Activated naive CD4-positive, alpha-beta T cell treated with anti-CD3 and anti-CD28 coated beads for 36 hours (primary cell): ENCODE measurements at regions of chr4 and their contacts with region 1.

Region 1: GRCh38 chr4:68498413-68499007 is 51.2 kb downstream of the TMPRSS11E start:
- DNase-seq: peak; percentile 81
- H3K4me3 Mint-ChIP-seq: no peak overlapping the region
- H3K27ac Mint-ChIP-seq: no peak overlapping the region
- H3K4me1 Mint-ChIP-seq: peaks cover 7% of the 10 kb centered on the region
- H3K27me3 Mint-ChIP-seq: no peaks in the 10 kb centered on the region

Region 2: GRCh38 chr4:67288964-67289363 is 1209.5 kb before region 1 on chr4:
- CTCF ChIA-PET with region 1: no interaction called
- intact Hi-C with region 1: no loop called
- DNase-seq: peak; percentile 56
- H3K4me3 Mint-ChIP-seq: no peak overlapping the region
- H3K27ac Mint-ChIP-seq: no peak overlapping the region
- H3K4me1 Mint-ChIP-seq: no peaks in the 10 kb centered on the region
- H3K27me3 Mint-ChIP-seq: peaks cover 5% of the 10 kb centered on the region

Region 3: DNA sequence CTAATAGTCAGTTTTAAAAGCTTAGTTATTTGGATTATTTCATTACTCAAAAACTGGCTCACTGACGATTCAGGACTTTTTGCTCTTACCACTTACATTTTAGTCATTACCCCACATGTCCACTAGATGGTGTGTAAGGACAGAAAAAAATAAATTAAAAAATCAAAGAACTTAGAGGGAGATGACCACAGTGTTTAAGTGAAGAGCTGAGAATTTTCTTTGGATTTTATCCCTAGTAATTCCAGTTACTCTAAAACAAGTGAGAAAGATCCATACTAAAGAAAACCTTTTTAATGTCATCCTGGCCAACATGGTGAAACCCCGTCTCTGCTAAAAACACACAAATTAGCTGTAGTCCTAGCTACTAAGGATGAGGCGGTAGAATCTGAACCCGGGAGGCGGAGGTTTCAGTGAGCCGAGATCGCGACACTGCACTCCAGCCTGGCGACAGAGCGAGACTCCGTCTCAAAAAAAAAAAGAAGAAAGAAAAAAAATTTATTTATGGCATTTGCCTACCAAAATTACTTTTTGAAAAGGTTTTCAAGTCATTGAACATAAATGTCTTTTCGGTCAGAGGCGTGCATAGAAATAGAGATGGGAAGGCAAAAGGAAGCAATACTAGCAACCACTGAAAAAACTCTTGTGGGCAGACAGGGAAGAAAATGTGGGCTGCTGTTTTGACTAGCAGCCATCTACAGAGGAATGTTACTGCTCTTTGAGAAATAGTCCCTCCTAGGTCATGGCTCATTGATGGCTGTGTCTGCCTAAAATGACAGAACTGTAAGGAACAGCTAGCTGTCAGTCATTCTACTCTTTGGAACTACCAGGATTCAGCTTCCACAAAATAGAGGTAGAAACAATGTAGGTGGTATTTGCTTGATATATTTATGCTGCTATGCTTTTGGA is 226.4 kb before region 1 on chr4:
- CTCF ChIA-PET with region 1: no interaction called
- intact Hi-C with region 1: loop called (anchors 2 kb)
- DNase-seq: no peak
- H3K4me3 Mint-ChIP-seq: peak overlapping the region; percentile 30
- H3K27ac Mint-ChIP-seq: no peak overlapping the region
- H3K4me1 Mint-ChIP-seq: peaks cover 8% of the 10 kb centered on the region
- H3K27me3 Mint-ChIP-seq: peaks cover 6% of the 10 kb centered on the region

Region 4: GRCh38 chr4:69167300-69167699 is 668.8 kb after region 1 on chr4:
- CTCF ChIA-PET with region 1: interaction called, 5 read pairs
- intact Hi-C with region 1: loop called (anchors 1 kb)
- DNase-seq: no peak
- H3K4me3 Mint-ChIP-seq: no peak overlapping the region
- H3K27ac Mint-ChIP-seq: no peak overlapping the region
- H3K4me1 Mint-ChIP-seq: no peaks in the 10 kb centered on the region
- H3K27me3 Mint-ChIP-seq: no peaks in the 10 kb centered on the region

Region 5: GRCh38 chr4:69617083-69617694 is 1118.7 kb after region 1 on chr4:
- CTCF ChIA-PET with region 1: no interaction called
- intact Hi-C with region 1: loop called (anchors 10 kb)
- DNase-seq: peak; percentile 4
- H3K4me3 Mint-ChIP-seq: no peak overlapping the region
- H3K27ac Mint-ChIP-seq: no peak overlapping the region
- H3K4me1 Mint-ChIP-seq: no peaks in the 10 kb centered on the region
- H3K27me3 Mint-ChIP-seq: no peaks in the 10 kb centered on the region

Region 6: DNA sequence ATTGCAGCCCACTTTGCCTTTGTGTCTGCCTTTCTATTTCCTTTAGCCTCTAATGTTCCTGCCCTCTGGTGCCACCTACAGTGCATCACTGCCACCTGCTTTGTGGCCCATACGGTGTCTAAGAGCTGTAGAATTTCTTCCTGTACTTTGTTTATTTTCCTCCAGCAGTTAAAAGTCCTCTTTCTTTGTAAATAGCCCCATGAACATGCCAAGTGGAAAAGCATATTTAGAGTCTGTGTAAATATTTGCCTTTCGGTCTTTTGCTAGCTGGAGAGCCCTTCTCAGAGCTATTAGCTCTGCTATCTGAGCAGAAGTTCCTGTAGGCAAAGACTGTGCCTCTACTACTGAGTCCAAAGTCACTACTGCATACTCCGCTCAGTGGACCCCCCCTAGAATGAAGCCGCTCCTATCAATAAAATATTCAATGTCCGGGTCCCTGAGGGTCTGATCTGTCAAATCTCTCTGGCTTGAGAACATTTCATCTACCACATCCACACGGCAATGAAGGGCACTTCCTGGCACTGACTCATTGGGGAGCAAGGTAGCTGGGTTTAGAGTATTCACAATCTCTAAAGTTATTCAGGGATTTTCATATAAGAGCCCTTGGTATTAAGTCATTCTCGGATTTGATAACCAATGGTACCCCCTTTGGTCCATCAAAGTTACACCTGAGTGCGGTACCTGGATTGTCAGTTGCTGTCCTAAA is 1325.1 kb after region 1 on chr4:
- CTCF ChIA-PET with region 1: no interaction called
- intact Hi-C with region 1: loop called (anchors 10 kb)
- DNase-seq: peak; percentile 78
- H3K4me3 Mint-ChIP-seq: no peak overlapping the region
- H3K27ac Mint-ChIP-seq: no peak overlapping the region
- H3K4me1 Mint-ChIP-seq: peaks cover 6% of the 10 kb centered on the region
- H3K27me3 Mint-ChIP-seq: no peaks in the 10 kb centered on the region

Region 7: GRCh38 chr4:70183168-70183939 is 1684.8 kb after region 1 on chr4:
- CTCF ChIA-PET with region 1: no interaction called
- intact Hi-C with region 1: loop called (anchors 5 kb)
- DNase-seq: peak; percentile 42
- H3K4me3 Mint-ChIP-seq: no peak overlapping the region
- H3K27ac Mint-ChIP-seq: no peak overlapping the region
- H3K4me1 Mint-ChIP-seq: no peaks in the 10 kb centered on the region
- H3K27me3 Mint-ChIP-seq: peaks cover 2% of the 10 kb centered on the region